ENCODE measurements at regions of chr18 and their contacts with region 1.

Region 1: DNA sequence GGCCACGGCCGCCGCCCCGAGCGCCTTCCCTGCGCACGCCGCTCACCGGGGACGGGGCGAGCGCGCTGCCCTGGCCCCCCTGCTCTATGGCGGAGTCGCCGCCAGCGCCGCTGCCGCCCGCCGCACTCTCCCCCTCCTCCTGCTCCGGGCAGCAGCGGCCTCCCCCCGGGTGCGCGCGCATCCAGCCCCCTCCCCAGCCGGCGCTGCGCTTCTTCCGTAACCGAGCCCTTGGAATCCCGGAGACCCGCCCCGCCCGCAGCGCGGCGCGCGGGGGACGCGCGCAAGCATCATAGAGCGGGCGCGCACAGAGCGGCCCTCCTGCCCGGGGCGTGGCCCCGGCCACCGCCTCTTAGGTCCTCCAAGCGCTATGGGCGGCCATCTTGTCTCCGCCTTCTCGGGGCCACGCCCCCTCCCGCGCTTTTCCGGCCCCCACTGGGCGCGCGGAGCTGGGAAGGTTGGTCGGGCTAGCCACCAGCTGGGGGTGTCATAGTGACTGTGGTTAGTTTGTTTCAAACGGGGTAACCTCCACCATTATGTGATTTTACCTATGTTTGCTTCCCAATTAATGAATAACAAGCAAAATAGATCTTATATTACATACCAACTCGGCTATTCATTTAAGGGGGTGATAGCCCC is at the start of gene MBD2:
- DNase-seq: peak; percentile 94 to 96 (median 96)
- ATAC-seq: peak; percentile 97 to 99 (median 98)
- H3K4me3 ChIP-seq: peak within 1 kb of the TSS; percentile 46 to 64 (median 55)
- H3K27ac ChIP-seq: peak within 1 kb of the TSS; percentile 39 to 89 (median 66)
- H3K4me1 ChIP-seq: peaks cover 12 to 29% (median 19%) of the 10 kb centered on the region in 3 donors
- H3K27me3 ChIP-seq: no peaks in the 10 kb centered on the region
- CTCF ChIP-seq: no peak
- total RNA-seq, gene MBD2: 44.0 to 60.5 (median 51.4) TPM

Region 2: GRCh38 chr18:54269893-54270844 is 45.7 kb after region 1 on chr18:
- intact Hi-C with region 1: loop called in 1 of 3 experiments (anchors 10 kb)
- DNase-seq: peak; percentile 37 to 59 (median 56)
- ATAC-seq: peak; percentile 51 to 66 (median 61)
- H3K4me3 ChIP-seq: peak overlapping the region; percentile 67 to 88 (median 81)
- H3K27ac ChIP-seq: peak overlapping the region; percentile 85 to 96 (median 93)
- H3K4me1 ChIP-seq: peaks cover 0 to 7% (median 0%) of the 10 kb centered on the region in 3 donors
- H3K27me3 ChIP-seq: no peaks in the 10 kb centered on the region
- CTCF ChIP-seq: peak in 3 of 4 donors; percentile 5 to 29 (median 23)

Region 3: DNA sequence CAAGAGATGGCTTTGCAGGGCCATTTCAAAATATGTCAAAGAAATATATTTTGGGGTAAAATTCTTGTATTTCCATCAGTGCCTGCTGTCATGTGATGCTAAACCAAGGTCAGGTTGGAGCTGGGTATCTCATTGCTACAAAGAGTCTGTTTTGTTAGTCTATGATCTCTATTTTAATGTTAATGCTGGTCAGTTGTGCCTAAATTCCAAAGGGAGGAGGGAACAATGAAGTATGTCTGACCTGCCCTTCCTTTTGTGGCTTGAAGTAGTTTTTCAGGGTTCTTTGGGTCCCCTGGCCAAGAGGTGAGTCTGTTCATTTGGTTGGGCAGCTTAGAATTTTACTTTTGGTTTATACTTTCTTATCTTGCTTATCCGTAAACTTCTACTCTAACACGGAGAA is 304.9 kb after region 1 on chr18:
- intact Hi-C with region 1: loop called in 1 of 3 experiments (anchors 10 kb)
- DNase-seq: no peak
- ATAC-seq: no peak
- H3K4me3 ChIP-seq: no peak overlapping the region
- H3K27ac ChIP-seq: no peak overlapping the region
- H3K4me1 ChIP-seq: peaks cover 0 to 3% (median under 1%) of the 10 kb centered on the region in 3 donors
- H3K27me3 ChIP-seq: no peaks in the 10 kb centered on the region
- CTCF ChIP-seq: no peak